Thyroid gland (tissue), 4 donors: ENCODE measurements at regions of chr13 and their contacts with region 1.

Region 1: GRCh38 chr13:78978381-78978998 is 319.5 kb upstream of the OBI1 start:
- DNase-seq: peak; percentile 21
- H3K4me3 ChIP-seq: no peak overlapping the region
- H3K27ac ChIP-seq: no peak overlapping the region
- H3K4me1 ChIP-seq: no peaks in the 10 kb centered on the region
- H3K27me3 ChIP-seq: no peaks in the 10 kb centered on the region
- CTCF ChIP-seq: peak in 5 of 6 experiments; percentile 32 to 73 (median 66)
- POLR2A ChIP-seq: no peak

Region 2: GRCh38 chr13:78137404-78138142 is 840.9 kb before region 1 on chr13:
- intact Hi-C with region 1: loop called (anchors 5 kb)
- DNase-seq: peak; percentile 2 to 3
- H3K4me3 ChIP-seq: no peak overlapping the region
- H3K27ac ChIP-seq: no peak overlapping the region
- H3K4me1 ChIP-seq: no peaks in the 10 kb centered on the region
- H3K27me3 ChIP-seq: no peaks in the 10 kb centered on the region
- CTCF ChIP-seq: peak; percentile 16 to 72 (median 42)
- POLR2A ChIP-seq: no peak

Region 3: DNA sequence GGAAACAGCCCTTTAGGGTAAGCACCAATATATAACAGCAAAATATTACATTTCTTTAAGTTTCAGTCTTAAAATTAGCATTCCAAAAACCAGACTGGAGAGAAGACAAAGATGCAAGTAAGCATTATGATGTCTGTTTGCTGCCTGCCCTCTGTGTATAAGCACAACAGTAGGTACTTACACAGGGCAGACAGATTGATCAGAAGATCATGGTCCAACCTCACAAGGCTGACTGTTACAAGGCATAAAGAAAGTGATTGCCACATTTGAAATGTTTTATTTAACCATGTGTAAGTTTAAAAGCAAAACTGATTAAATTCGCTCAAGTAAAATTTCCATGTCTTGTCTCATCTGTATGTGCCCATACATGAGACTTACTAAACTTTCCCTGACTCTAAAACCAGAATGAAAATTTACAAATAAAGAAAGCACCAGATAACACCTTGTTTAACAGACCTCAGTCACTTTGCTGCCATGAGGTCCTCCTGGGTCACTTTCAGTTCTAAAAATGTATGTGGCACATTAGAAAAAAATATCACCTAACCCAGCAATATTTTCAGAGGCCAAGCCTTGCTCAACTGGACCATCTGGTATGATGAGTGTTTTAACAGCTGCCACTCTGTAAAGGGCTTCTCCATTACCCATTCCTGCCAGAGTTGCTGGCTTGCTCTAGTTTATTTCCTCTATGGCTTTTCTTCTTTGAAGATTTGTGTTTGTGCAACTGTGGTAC is 130.6 kb after region 1 on chr13:
- intact Hi-C with region 1: no loop called
- DNase-seq: no peak
- H3K4me3 ChIP-seq: no peak overlapping the region
- H3K27ac ChIP-seq: no peak overlapping the region
- H3K4me1 ChIP-seq: no peaks in the 10 kb centered on the region
- H3K27me3 ChIP-seq: no peaks in the 10 kb centered on the region
- CTCF ChIP-seq: no peak
- POLR2A ChIP-seq: no peak